ENCODE measurements at regions of chr4 and their contacts with region 1.

Region 1: GRCh38 chr4:183471946-183472708 is 27.7 kb downstream of the CDKN2AIP start:
- DNase-seq: peak; percentile 90
- H3K4me3 Mint-ChIP-seq: no peak overlapping the region
- H3K27ac Mint-ChIP-seq: no peak overlapping the region
- H3K4me1 Mint-ChIP-seq: peaks cover 14% of the 10 kb centered on the region
- H3K27me3 Mint-ChIP-seq: no peaks in the 10 kb centered on the region
- CTCF ChIP-seq: peak; percentile 63

Region 2: DNA sequence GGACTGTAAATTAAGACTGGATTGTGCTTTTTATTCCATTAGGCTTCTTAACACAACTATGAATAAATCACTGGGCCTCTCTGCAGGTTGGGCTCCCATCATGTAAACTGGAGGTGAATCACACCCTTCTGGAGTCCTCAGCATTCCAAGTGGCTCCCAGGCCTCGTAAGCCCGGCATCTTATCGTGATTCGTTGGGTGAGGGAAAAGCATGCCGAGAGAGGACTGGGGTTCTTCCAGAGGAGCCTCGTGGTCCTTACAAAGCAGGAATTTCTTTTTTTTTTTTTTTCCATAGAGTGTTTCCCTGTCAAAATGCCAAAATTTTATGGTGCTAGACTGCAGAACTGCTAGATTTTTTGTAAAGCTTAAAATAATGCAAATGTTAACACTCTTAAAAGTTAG is 172.1 kb before region 1 on chr4:
- CTCF ChIA-PET with region 1: no interaction called
- POLR2A ChIA-PET with region 1: no interaction called
- intact Hi-C with region 1: no loop called
- DNase-seq: no peak
- H3K4me3 Mint-ChIP-seq: no peak overlapping the region
- H3K27ac Mint-ChIP-seq: no peak overlapping the region
- H3K4me1 Mint-ChIP-seq: no peaks in the 10 kb centered on the region
- H3K27me3 Mint-ChIP-seq: no peaks in the 10 kb centered on the region
- CTCF ChIP-seq: no peak

Region 3: DNA sequence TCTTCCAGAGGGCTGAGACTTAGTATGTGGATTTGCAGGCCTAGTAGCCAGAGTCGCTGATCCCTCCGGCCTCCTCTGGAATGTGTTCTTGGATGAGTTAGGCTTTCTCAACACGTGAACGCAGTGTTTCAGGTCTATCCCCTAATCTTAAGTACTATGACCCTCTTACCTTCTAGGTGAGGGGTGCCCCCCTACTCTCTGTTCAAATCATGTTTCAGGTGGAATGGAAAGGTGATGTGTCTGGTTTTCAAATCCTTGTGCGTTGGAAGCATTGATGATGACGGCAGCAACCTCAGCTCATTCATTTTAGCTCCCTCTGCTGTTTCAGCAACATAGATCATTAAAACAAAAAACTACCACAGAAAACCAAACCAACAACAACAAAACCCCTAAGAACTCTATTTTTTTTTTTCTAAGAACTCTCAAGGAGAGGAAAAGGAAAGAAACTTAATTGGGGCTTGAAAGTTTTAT is 130.5 kb after region 1 on chr4:
- CTCF ChIA-PET with region 1: interaction called, 47 read pairs
- POLR2A ChIA-PET with region 1: interaction called, 3 read pairs
- intact Hi-C with region 1: loop called (anchors 1 kb)
- DNase-seq: peak; percentile 30
- H3K4me3 Mint-ChIP-seq: no peak overlapping the region
- H3K27ac Mint-ChIP-seq: no peak overlapping the region
- H3K4me1 Mint-ChIP-seq: no peaks in the 10 kb centered on the region
- H3K27me3 Mint-ChIP-seq: no peaks in the 10 kb centered on the region
- CTCF ChIP-seq: peak; percentile 22

Region 4: DNA sequence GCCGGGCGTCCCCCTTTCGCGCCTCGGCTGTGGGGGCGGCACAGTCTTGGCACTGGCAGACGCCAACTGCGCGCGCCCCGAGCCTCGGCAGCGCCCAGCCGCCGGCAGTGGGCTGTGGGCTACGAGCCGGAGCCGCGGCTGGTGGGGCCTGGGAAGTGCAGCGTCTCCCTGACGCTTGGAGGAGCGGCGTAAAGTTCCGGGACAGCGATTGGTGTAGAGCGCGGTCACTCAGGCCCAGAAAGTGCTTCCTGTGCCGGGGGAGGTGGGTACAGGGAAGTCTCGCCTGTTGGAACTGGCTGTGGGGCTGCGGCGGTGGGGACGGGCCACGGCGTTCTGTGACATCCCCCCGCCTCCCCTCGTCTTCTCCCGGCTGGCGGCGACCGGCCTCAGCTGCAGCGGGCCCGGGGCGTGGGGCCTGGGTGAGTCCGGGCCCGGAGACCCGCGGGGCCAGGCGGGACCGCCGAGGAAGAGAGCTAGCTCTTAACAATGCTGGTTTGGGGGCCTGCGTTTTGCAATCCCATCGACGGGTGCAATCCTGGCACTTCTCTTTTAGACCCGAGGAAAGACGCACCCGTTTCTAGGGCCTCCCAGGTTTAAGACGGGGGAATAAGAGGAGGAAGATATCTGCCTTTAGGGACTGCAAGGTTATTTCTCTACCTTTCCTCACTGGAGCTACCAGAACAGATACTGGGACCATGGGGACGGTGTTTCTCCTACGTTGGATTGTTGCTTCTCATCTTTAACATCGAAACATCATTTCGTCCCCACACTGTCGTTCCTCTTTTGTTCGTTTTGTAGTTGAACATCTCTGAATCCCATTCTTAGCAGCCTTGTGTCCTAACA is 187.1 kb after region 1 on chr4 and contains the starts of genes RWDD4 and TRAPPC11:
- CTCF ChIA-PET with region 1: interaction called, 6 read pairs
- POLR2A ChIA-PET with region 1: no interaction called
- intact Hi-C with region 1: loop called (anchors 1 kb)
- DNase-seq: peak; percentile 98
- H3K4me3 Mint-ChIP-seq: peak within 1 kb of the TSS; percentile 85
- H3K27ac Mint-ChIP-seq: peak within 1 kb of the TSS; percentile 82
- H3K4me1 Mint-ChIP-seq: peaks cover 22% of the 10 kb centered on the region
- H3K27me3 Mint-ChIP-seq: no peaks in the 10 kb centered on the region
- CTCF ChIP-seq: peak; percentile 13
- total RNA-seq, gene RWDD4: 23.0 and 26.1 TPM in 2 replicates
- total RNA-seq, gene TRAPPC11: 29.4 and 35.0 TPM in 2 replicates

Region 5: DNA sequence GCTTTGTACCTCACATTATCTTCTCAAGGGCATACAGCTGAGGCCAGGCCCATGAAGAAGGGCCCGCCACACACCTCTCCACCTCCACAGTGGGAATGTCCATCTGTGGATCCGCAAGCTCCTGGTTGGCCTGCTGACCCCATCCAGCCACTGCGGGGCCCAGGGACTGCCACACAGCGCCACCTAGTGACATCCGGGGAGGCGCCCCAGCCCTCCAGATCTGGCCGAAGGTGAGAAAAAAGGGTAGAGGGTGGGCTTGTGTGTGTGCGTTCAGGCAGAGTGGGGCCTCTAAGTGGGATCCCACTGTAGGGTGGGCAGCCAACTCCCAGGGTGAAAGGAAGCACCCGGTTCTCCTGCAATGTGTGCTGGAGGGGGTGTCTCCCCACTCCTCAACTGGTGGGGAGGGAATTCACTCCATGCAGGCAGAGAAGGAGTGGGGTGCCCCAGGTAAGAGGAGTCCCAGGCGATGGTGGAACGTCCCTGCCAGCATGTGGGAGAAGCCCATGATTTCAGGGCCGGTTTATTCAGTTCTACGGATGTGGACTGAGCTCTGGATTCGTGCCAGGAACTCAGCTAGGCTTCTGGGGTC is 628.3 kb after region 1 on chr4:
- CTCF ChIA-PET with region 1: interaction called, 10 read pairs
- POLR2A ChIA-PET with region 1: no interaction called
- intact Hi-C with region 1: no loop called
- DNase-seq: peak; percentile 37
- H3K4me3 Mint-ChIP-seq: no peak overlapping the region
- H3K27ac Mint-ChIP-seq: no peak overlapping the region
- H3K4me1 Mint-ChIP-seq: no peaks in the 10 kb centered on the region
- H3K27me3 Mint-ChIP-seq: no peaks in the 10 kb centered on the region
- CTCF ChIP-seq: peak; percentile 70

Region 6: GRCh38 chr4:184250795-184251669 is 778.9 kb after region 1 on chr4:
- CTCF ChIA-PET with region 1: no interaction called
- POLR2A ChIA-PET with region 1: no interaction called
- intact Hi-C with region 1: loop called (anchors 10 kb)
- DNase-seq: peak; percentile 73
- H3K4me3 Mint-ChIP-seq: no peak overlapping the region
- H3K27ac Mint-ChIP-seq: no peak overlapping the region
- H3K4me1 Mint-ChIP-seq: peaks cover 10% of the 10 kb centered on the region
- H3K27me3 Mint-ChIP-seq: no peaks in the 10 kb centered on the region
- CTCF ChIP-seq: peak; percentile 45

Measured in MCF 10A (cell line).